B cell (primary cell): ENCODE measurements at regions of chr3 and their contacts with region 1.

Region 1: DNA sequence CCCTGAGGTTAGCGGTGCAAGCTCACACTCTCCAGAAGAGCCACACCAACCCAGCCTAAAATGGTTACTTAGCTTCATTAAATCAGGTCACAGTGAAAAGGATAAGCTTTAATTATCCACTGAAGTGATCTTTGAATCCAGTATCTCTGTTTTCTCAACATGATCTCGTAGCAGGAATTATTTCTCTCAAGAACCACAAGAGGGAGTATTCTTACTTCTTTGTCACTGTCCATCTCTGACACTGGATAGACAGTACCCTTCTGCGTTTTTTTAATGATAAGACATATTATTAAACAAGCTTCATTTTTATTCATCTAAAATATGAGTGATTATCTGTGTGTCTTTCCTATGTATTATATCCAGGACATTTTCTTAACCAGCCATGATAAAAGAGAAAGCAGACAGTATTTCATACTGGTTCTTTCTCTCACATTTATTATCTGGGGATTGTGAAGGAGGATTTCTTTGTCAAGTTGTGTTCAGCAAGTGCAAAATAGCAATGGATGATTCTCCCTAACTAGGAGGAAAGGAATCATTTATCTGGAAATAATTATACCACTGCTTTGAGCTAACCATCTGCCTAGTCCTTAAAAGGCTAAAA is 105.4 kb upstream of the CCDC54 start:
- DNase-seq: peak; percentile 46
- ATAC-seq: peak; percentile 45
- H3K4me3 ChIP-seq: no peak overlapping the region
- H3K4me3 Mint-ChIP-seq: no peak overlapping the region
- H3K27ac ChIP-seq: no peak overlapping the region
- H3K27ac Mint-ChIP-seq: no peak overlapping the region
- H3K4me1 ChIP-seq: no peaks in the 10 kb centered on the region
- H3K4me1 Mint-ChIP-seq: no peaks in the 10 kb centered on the region
- H3K27me3 ChIP-seq: peaks cover 0 to 2% (median 0%) of the 10 kb centered on the region in 4 experiments
- H3K27me3 Mint-ChIP-seq: peaks cover 15% of the 10 kb centered on the region
- CTCF ChIP-seq: peak; percentile 79

Region 2: DNA sequence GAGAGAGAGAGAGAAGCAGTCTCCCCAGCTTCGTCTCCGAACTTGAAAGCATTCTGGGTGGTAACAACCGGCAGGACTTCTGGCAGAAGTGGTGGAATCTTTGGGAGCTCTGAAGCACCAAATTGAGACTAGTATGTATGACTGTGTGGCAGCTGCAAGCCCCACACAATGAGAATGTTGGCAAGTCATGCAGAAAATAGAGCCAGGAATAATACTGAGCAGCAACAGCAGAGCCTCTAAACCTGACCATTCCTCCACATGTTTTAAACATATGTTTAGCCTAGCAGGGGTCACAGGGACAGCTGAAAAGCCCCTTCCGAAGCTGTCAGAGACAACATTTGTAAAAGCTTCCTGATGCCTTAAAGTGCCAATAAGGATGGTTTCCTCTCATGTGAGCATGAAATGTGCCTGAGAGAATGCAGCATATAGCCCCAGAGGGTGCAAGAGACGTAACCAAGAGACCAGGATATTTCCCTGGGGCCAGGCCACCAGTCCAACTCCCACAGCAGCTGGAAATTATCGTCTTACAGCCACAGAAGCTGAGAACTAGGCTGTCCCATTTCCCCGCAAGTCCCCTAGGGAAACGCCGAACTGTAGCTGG is 73.2 kb before region 1 on chr3:
- CTCF ChIA-PET with region 1: no interaction called
- POLR2A ChIA-PET with region 1: no interaction called
- intact Hi-C with region 1: no loop called
- DNase-seq: no peak
- ATAC-seq: no peak
- H3K4me3 ChIP-seq: no peak overlapping the region
- H3K4me3 Mint-ChIP-seq: no peak overlapping the region
- H3K27ac ChIP-seq: no peak overlapping the region
- H3K27ac Mint-ChIP-seq: no peak overlapping the region
- H3K4me1 ChIP-seq: no peaks in the 10 kb centered on the region
- H3K4me1 Mint-ChIP-seq: no peaks in the 10 kb centered on the region
- H3K27me3 ChIP-seq: peaks cover 0 to 6% (median 0%) of the 10 kb centered on the region in 4 experiments
- H3K27me3 Mint-ChIP-seq: peaks cover 31% of the 10 kb centered on the region
- CTCF ChIP-seq: no peak

Region 3: DNA sequence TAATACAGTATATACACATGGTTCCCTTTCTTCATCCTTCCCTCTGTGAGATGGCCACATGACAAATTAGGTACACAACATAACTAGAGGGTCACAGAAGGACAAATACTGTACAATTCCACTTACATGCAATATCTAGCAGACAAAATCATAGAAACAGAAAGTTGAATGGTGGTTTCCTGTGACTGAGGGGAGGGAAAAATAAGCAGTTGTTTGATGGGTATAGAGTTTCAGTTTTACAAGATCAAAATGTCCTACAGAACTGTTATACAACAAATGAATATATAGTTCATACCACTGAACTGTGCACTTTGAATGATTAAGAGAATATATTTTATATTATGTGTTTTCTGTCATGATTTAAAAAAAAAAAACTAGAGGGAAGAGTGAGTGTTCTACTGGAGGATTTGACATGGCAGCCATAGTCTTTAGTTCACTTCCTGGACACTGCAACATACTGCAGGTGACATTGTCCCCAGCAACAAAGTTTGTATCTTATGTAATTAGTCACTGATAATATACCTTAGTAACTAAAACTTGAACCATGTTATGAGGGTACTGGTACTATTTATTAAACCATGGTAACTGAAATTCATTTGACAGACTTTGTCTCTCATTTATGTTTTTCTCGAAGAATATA is 142.6 kb after region 1 on chr3:
- CTCF ChIA-PET with region 1: interaction called, 34 read pairs
- POLR2A ChIA-PET with region 1: no interaction called
- intact Hi-C with region 1: no loop called
- DNase-seq: no peak
- ATAC-seq: no peak
- H3K4me3 ChIP-seq: no peak overlapping the region
- H3K4me3 Mint-ChIP-seq: no peak overlapping the region
- H3K27ac ChIP-seq: no peak overlapping the region
- H3K27ac Mint-ChIP-seq: no peak overlapping the region
- H3K4me1 ChIP-seq: no peaks in the 10 kb centered on the region
- H3K4me1 Mint-ChIP-seq: peaks cover 5% of the 10 kb centered on the region
- H3K27me3 ChIP-seq: no peaks in the 10 kb centered on the region
- H3K27me3 Mint-ChIP-seq: no peaks in the 10 kb centered on the region
- CTCF ChIP-seq: no peak

Region 4: DNA sequence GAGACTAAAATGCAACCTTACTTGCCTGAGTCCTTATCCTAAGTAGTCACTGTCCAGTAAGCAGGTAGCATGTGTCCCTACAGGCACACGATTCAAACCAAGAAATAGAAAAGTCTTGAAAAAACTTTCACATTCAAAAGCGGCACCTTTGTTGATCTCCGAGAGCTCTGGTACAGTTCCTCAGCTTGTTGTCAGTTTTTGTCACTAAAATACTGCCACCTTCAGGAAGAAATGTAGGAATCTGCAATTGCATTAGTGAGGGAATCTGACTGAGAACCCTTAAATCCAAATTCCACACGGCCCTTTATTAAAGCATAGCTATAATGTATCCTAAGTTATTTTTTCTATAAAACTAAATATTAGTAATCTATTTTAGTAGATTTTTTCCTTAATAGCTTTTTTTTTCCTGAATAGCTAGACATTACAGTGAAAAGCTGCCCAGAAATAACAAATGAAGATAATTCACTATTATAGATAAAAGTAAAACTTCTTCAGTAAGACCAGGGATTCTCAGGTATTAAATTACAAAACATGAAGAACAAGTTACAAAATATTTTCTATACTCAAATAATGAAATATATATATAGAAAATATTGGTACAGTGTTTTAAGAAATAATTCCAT is 149.4 kb after region 1 on chr3:
- CTCF ChIA-PET with region 1: interaction called, 34 read pairs
- POLR2A ChIA-PET with region 1: no interaction called
- intact Hi-C with region 1: loop called (anchors 2 kb)
- DNase-seq: peak; percentile 63
- ATAC-seq: peak; percentile 64
- H3K4me3 ChIP-seq: peak overlapping the region in 1 of 5 experiments; percentile 33
- H3K4me3 Mint-ChIP-seq: peak overlapping the region; percentile 75
- H3K27ac ChIP-seq: no peak overlapping the region
- H3K27ac Mint-ChIP-seq: no peak overlapping the region
- H3K4me1 ChIP-seq: peaks cover 10 to 13% of the 10 kb centered on the region in 2 donors
- H3K4me1 Mint-ChIP-seq: peaks cover 16% of the 10 kb centered on the region
- H3K27me3 ChIP-seq: no peaks in the 10 kb centered on the region
- H3K27me3 Mint-ChIP-seq: peaks cover 3% of the 10 kb centered on the region
- CTCF ChIP-seq: peak; percentile 74

Region 5: GRCh38 chr3:107429320-107430181 is 157.7 kb after region 1 on chr3:
- CTCF ChIA-PET with region 1: interaction called, 55 read pairs
- POLR2A ChIA-PET with region 1: no interaction called
- intact Hi-C with region 1: loop called (anchors 1 kb)
- DNase-seq: peak; percentile 82
- ATAC-seq: peak; percentile 52
- H3K4me3 ChIP-seq: peak overlapping the region; percentile 44 to 80 (median 70)
- H3K4me3 Mint-ChIP-seq: peak overlapping the region; percentile 97
- H3K27ac ChIP-seq: no peak overlapping the region
- H3K27ac Mint-ChIP-seq: peak overlapping the region; percentile 85
- H3K4me1 ChIP-seq: peaks cover 49% of the 10 kb centered on the region in 2 donors
- H3K4me1 Mint-ChIP-seq: peaks cover 59% of the 10 kb centered on the region
- H3K27me3 ChIP-seq: no peaks in the 10 kb centered on the region
- H3K27me3 Mint-ChIP-seq: no peaks in the 10 kb centered on the region
- CTCF ChIP-seq: peak; percentile 90

Region 6: GRCh38 chr3:107522510-107523288 is 250.8 kb after region 1 on chr3 and contains the start of gene BBX:
- CTCF ChIA-PET with region 1: interaction called, 4 read pairs
- POLR2A ChIA-PET with region 1: no interaction called
- intact Hi-C with region 1: loop called (anchors 5 kb)
- DNase-seq: peak; percentile 97
- ATAC-seq: peak; percentile 84
- H3K4me3 ChIP-seq: peak within 1 kb of the TSS; percentile 74 to 96 (median 92)
- H3K4me3 Mint-ChIP-seq: peak within 1 kb of the TSS; percentile 98
- H3K27ac ChIP-seq: peak within 1 kb of the TSS; percentile 81 to 92
- H3K27ac Mint-ChIP-seq: peak within 1 kb of the TSS; percentile 99
- H3K4me1 ChIP-seq: peaks cover 24 to 27% of the 10 kb centered on the region in 2 donors
- H3K4me1 Mint-ChIP-seq: peaks cover 34% of the 10 kb centered on the region
- H3K27me3 ChIP-seq: no peaks in the 10 kb centered on the region
- H3K27me3 Mint-ChIP-seq: no peaks in the 10 kb centered on the region
- CTCF ChIP-seq: no peak
- total RNA-seq, gene BBX: 131 and 133 TPM in 2 replicates

Region 7: GRCh38 chr3:107543666-107544065 is 271.8 kb after region 1 on chr3:
- CTCF ChIA-PET with region 1: interaction called, 11 read pairs
- POLR2A ChIA-PET with region 1: no interaction called
- intact Hi-C with region 1: loop called (anchors 2 kb)
- DNase-seq: peak; percentile 35
- ATAC-seq: no peak
- H3K4me3 ChIP-seq: no peak overlapping the region
- H3K4me3 Mint-ChIP-seq: no peak overlapping the region
- H3K27ac ChIP-seq: no peak overlapping the region
- H3K27ac Mint-ChIP-seq: no peak overlapping the region
- H3K4me1 ChIP-seq: no peaks in the 10 kb centered on the region
- H3K4me1 Mint-ChIP-seq: peaks cover 19% of the 10 kb centered on the region
- H3K27me3 ChIP-seq: no peaks in the 10 kb centered on the region
- H3K27me3 Mint-ChIP-seq: no peaks in the 10 kb centered on the region
- CTCF ChIP-seq: peak; percentile 40

Region 8: GRCh38 chr3:107740992-107741896 is 469.4 kb after region 1 on chr3:
- CTCF ChIA-PET with region 1: interaction called, 5 read pairs
- POLR2A ChIA-PET with region 1: no interaction called
- intact Hi-C with region 1: loop called (anchors 2 kb)
- DNase-seq: peak; percentile 43
- ATAC-seq: no peak
- H3K4me3 ChIP-seq: no peak overlapping the region
- H3K4me3 Mint-ChIP-seq: no peak overlapping the region
- H3K27ac ChIP-seq: no peak overlapping the region
- H3K27ac Mint-ChIP-seq: no peak overlapping the region
- H3K4me1 ChIP-seq: peaks cover 18 to 21% of the 10 kb centered on the region in 2 donors
- H3K4me1 Mint-ChIP-seq: peaks cover 36% of the 10 kb centered on the region
- H3K27me3 ChIP-seq: no peaks in the 10 kb centered on the region
- H3K27me3 Mint-ChIP-seq: no peaks in the 10 kb centered on the region
- CTCF ChIP-seq: peak; percentile 76